Activated CD4-positive, alpha-beta T cell treated with anti-CD3 and anti-CD28 coated beads for 36 hours (primary cell): ENCODE measurements at regions of chr9 and their contacts with region 1.

Region 1: GRCh38 chr9:72763022-72763421 is 189.8 kb downstream of the ALDH1A1 start:
- DNase-seq: no peak
- ATAC-seq: no peak
- H3K4me3 Mint-ChIP-seq: no peak overlapping the region
- H3K27ac Mint-ChIP-seq: no peak overlapping the region
- H3K4me1 Mint-ChIP-seq: no peaks in the 10 kb centered on the region
- H3K27me3 Mint-ChIP-seq: peaks cover 2% of the 10 kb centered on the region

Region 2: GRCh38 chr9:72262063-72262462 is 501.0 kb before region 1 on chr9:
- CTCF ChIA-PET with region 1: no interaction called
- POLR2A ChIA-PET with region 1: no interaction called
- intact Hi-C with region 1: no loop called
- DNase-seq: no peak
- ATAC-seq: no peak
- H3K4me3 Mint-ChIP-seq: no peak overlapping the region
- H3K27ac Mint-ChIP-seq: no peak overlapping the region
- H3K4me1 Mint-ChIP-seq: no peaks in the 10 kb centered on the region
- H3K27me3 Mint-ChIP-seq: no peaks in the 10 kb centered on the region

Region 3: DNA sequence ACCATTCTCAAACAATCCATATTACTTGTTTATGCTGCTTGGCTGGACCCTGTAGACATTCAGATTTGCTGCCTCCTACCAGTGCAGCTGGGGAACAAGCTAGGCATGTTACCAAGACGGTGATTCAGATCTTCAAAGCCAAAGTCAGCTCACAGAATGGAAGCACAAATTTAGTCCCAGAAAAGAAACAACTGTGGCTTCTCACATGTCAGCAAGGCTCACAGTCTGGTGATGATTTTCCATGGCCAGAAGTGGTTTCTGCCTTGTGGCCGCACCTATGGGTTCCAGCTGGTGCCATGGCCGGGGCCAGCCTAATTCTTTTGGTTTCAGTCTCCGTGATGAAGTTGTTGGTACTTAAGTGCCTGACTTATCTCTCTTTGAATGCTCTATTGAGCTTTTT is 59.4 kb before region 1 on chr9:
- CTCF ChIA-PET with region 1: no interaction called
- POLR2A ChIA-PET with region 1: no interaction called
- intact Hi-C with region 1: loop called in 1 of 2 experiments (anchors 10 kb)
- DNase-seq: no peak
- ATAC-seq: no peak
- H3K4me3 Mint-ChIP-seq: no peak overlapping the region
- H3K27ac Mint-ChIP-seq: no peak overlapping the region
- H3K4me1 Mint-ChIP-seq: no peaks in the 10 kb centered on the region
- H3K27me3 Mint-ChIP-seq: peaks cover 2% of the 10 kb centered on the region

Region 4: GRCh38 chr9:72997387-72997995 is 234.5 kb after region 1 on chr9:
- CTCF ChIA-PET with region 1: no interaction called
- POLR2A ChIA-PET with region 1: no interaction called
- intact Hi-C with region 1: no loop called
- DNase-seq: no peak
- ATAC-seq: no peak
- H3K4me3 Mint-ChIP-seq: no peak overlapping the region
- H3K27ac Mint-ChIP-seq: no peak overlapping the region
- H3K4me1 Mint-ChIP-seq: peaks cover 4% of the 10 kb centered on the region
- H3K27me3 Mint-ChIP-seq: peaks cover 4% of the 10 kb centered on the region